ENCODE measurements at regions of chr15 and their contacts with region 1.

Region 1: DNA sequence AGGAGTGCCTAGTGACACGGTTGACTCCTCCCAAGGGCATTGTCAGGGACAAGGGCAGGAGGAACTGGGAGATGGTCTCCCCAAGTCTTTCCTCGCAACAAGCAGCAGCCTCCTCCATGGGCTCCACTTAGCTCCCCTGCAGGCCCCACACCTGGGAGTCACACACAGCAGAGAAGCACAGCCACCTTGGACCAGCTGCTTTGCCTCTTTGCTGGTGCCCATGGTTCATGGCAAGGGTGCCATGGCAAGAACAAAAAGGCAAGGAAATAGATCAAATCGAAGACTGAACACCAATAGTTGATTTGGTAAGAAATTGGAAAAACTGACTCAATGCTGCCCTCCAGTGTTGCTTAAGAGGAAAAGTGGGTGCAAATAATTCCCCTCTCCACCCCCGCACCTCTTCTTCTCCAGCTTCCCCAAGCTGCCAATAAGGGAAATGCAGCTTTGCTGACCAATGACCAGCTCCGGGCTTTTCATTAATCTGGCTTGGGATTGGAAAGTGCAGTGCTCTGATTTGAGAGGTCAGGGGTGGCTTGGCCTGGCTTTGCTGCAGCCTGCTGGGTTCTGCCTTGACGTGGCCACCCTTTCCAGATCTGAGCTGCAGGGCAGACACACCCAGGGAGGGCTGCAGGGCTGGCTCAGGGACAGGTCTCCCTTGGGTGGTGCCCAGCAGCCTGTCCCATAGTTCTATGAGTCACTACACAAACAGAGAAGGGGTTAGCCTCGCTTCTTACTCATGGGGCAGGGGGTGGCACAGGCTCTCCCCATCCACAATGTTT is 162.0 kb downstream of the KLF13 start:
- DNase-seq: peak in 4 of 5 donors; percentile 64 to 69 (median 66)
- H3K4me3 ChIP-seq: no peak overlapping the region
- H3K4me3 Mint-ChIP-seq: peak overlapping the region in 1 of 8 donors; percentile 30
- H3K27ac ChIP-seq: no peak overlapping the region
- H3K27ac Mint-ChIP-seq: peak overlapping the region in 5 of 7 donors; percentile 17 to 77 (median 72)
- H3K4me1 ChIP-seq: peaks cover 37% of the 10 kb centered on the region
- H3K4me1 Mint-ChIP-seq: peaks cover 14 to 51% (median 24%) of the 10 kb centered on the region in 4 donors
- H3K27me3 ChIP-seq: no peaks in the 10 kb centered on the region
- H3K27me3 Mint-ChIP-seq: no peaks in the 10 kb centered on the region

Region 2: DNA sequence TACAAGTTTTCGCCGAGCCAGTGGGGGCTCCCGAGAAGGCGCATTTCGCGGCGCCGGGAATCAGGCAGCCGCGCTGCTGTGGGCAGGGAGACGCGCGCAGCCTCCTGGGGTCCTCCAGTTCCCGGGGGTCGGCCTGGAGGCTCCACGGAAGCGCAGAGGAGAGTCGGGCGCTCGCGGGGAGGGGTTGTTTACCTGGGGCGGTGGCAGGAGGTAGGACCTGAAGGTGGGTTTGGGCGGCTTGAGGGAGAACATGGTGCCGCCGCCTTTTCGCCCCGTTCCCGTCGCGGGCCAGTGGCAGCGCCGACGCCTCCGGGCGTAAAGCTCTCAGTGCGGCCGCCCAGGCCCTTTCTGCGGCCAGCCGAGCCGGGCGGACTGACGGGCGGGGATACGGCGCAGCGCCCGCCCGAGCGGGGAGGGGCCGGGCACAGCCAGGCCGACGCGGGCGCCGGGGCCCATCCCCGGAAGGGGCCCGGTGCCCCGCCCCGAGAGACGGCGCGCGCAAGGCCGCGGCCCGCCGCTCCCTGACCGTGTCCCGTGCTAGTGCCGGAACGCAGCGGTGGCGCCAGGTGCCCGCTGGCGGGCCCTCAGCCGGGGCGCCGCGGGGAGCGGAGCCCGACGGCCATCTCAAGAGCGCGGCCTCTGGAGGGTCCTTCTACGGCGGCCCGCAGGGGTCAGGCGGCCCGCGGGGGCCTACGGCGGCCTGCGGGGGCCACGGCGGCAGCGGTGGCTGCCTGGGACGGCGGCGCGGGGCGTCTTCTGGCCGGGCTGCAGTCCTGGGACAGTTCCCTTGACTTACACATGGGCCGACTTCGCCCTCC is 497.2 kb before region 1 on chr15 and contains the start of gene MTMR10:
- CTCF ChIA-PET with region 1: interaction called, 10 read pairs
- POLR2A ChIA-PET with region 1: no interaction called
- intact Hi-C with region 1: loop called (anchors 5 kb)
- DNase-seq: peak; percentile 70 to 84 (median 82)
- H3K4me3 ChIP-seq: peak within 1 kb of the TSS; percentile 64 to 76
- H3K4me3 Mint-ChIP-seq: peak within 1 kb of the TSS; percentile 94 to 98 (median 96)
- H3K27ac ChIP-seq: peak within 1 kb of the TSS; percentile 76
- H3K27ac Mint-ChIP-seq: peak within 1 kb of the TSS; percentile 89 to 95 (median 94)
- H3K4me1 ChIP-seq: peaks cover 30% of the 10 kb centered on the region
- H3K4me1 Mint-ChIP-seq: peaks cover 19 to 32% (median 27%) of the 10 kb centered on the region in 4 donors
- H3K27me3 ChIP-seq: no peaks in the 10 kb centered on the region
- H3K27me3 Mint-ChIP-seq: no peaks in the 10 kb centered on the region
- total RNA-seq, gene MTMR10: 29.6 to 31.8 TPM

Region 3: DNA sequence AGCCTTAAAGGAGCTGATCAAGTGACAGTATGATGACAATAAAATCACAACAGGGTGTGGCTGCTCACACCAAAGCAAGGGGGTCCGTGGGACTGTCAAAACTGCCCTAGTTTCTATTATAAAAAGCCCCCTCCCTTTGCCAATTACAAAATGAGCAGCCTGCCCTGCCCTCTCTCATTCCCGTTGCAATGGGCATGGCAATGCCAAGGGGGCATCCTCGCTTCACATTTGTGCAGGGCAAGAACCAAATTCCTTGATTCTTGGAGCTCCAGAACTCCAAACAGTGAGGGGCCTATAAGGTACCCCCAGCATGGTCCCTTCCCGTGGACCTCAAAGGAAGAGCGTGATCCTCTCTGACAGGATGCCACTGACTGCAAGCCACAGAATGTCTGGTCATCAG is 282.2 kb before region 1 on chr15:
- CTCF ChIA-PET with region 1: interaction called, 224 read pairs
- POLR2A ChIA-PET with region 1: interaction called, 19 read pairs
- intact Hi-C with region 1: no loop called
- DNase-seq: no peak
- H3K4me3 ChIP-seq: no peak overlapping the region
- H3K4me3 Mint-ChIP-seq: no peak overlapping the region
- H3K27ac ChIP-seq: no peak overlapping the region
- H3K27ac Mint-ChIP-seq: no peak overlapping the region
- H3K4me1 ChIP-seq: peaks cover 36% of the 10 kb centered on the region
- H3K4me1 Mint-ChIP-seq: peaks cover 14 to 34% (median 22%) of the 10 kb centered on the region in 4 donors
- H3K27me3 ChIP-seq: no peaks in the 10 kb centered on the region
- H3K27me3 Mint-ChIP-seq: no peaks in the 10 kb centered on the region

Region 4: DNA sequence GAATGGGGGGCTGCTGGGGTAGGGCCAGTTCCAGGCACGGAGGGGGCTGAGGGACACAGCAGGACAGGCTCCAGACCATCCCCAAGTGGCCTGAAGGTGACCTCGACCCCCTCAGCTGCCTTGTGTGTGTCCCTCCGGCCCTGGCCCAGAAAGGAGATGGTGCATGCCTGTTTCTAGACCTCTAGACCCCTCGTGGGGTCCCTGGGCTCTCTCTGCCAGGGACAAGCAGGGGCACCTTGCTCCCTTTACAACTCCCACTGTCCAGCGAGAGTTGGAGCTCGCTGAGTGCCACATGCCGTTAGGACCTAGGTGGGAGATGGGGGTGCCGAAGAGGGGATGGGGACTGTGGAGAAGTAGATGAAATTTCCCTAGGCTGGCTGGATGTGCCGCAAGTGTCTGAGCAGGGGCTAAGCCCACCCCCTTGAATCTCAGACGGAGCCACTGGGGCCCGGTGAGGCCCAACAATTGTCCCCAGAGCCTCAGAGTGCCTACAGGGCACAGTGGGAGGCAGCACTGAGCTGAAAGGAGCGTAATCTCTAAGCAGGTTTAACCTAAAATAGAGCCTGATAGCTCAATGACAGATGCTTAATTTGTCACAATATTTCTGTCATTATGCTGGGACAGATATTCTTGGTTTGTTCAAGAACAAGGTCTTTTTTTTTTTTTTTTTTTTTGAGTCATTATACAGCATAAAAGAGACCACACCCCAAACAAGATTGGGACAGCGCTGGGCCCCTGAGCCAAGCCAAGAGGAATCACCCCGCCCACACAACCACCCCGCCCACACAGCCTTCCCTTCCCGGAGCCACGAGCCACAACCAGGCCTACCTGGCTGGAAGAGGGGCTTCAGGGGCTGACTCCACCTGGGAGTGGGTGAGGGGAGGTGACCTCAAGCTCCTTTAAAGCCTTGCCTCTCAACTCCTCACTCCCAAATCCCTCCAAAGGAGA is 185.6 kb before region 1 on chr15:
- CTCF ChIA-PET with region 1: interaction called, 9 read pairs
- POLR2A ChIA-PET with region 1: no interaction called
- intact Hi-C with region 1: loop called (anchors 1 kb)
- DNase-seq: peak in 1 of 5 donors; percentile 16
- H3K4me3 ChIP-seq: no peak overlapping the region
- H3K4me3 Mint-ChIP-seq: peak overlapping the region in 1 of 8 donors; percentile 26
- H3K27ac ChIP-seq: no peak overlapping the region
- H3K27ac Mint-ChIP-seq: peak overlapping the region in 4 of 7 donors; percentile 23 to 42 (median 36)
- H3K4me1 ChIP-seq: peaks cover 16% of the 10 kb centered on the region
- H3K4me1 Mint-ChIP-seq: peaks cover 17 to 39% (median 27%) of the 10 kb centered on the region in 4 donors
- H3K27me3 ChIP-seq: no peaks in the 10 kb centered on the region
- H3K27me3 Mint-ChIP-seq: peaks cover 0 to 7% of the 10 kb centered on the region in 2 donors

Region 5: GRCh38 chr15:31365655-31366127 is 122.9 kb before region 1 on chr15:
- CTCF ChIA-PET with region 1: interaction called, 137 read pairs
- POLR2A ChIA-PET with region 1: interaction called, 49 read pairs
- intact Hi-C with region 1: loop called (anchors 1 kb)
- DNase-seq: peak; percentile 71 to 84 (median 77)
- H3K4me3 ChIP-seq: peak overlapping the region in 1 of 2 donors; percentile 17
- H3K4me3 Mint-ChIP-seq: peak overlapping the region; percentile 79 to 91 (median 84)
- H3K27ac ChIP-seq: peak overlapping the region; percentile 82
- H3K27ac Mint-ChIP-seq: peak overlapping the region; percentile 91 to 98 (median 96)
- H3K4me1 ChIP-seq: peaks cover 99% of the 10 kb centered on the region
- H3K4me1 Mint-ChIP-seq: peaks cover 70 to 100% (median 92%) of the 10 kb centered on the region in 4 donors
- H3K27me3 ChIP-seq: no peaks in the 10 kb centered on the region
- H3K27me3 Mint-ChIP-seq: no peaks in the 10 kb centered on the region

Region 6: GRCh38 chr15:31396881-31397560 is 91.6 kb before region 1 on chr15:
- CTCF ChIA-PET with region 1: interaction called, 11 read pairs
- POLR2A ChIA-PET with region 1: interaction called, 18 read pairs
- intact Hi-C with region 1: loop called (anchors 2 kb)
- DNase-seq: no peak
- H3K4me3 ChIP-seq: no peak overlapping the region
- H3K4me3 Mint-ChIP-seq: no peak overlapping the region
- H3K27ac ChIP-seq: no peak overlapping the region
- H3K27ac Mint-ChIP-seq: no peak overlapping the region
- H3K4me1 ChIP-seq: peaks cover 15% of the 10 kb centered on the region
- H3K4me1 Mint-ChIP-seq: peaks cover 10 to 41% (median 17%) of the 10 kb centered on the region in 4 donors
- H3K27me3 ChIP-seq: no peaks in the 10 kb centered on the region
- H3K27me3 Mint-ChIP-seq: no peaks in the 10 kb centered on the region

Region 7: DNA sequence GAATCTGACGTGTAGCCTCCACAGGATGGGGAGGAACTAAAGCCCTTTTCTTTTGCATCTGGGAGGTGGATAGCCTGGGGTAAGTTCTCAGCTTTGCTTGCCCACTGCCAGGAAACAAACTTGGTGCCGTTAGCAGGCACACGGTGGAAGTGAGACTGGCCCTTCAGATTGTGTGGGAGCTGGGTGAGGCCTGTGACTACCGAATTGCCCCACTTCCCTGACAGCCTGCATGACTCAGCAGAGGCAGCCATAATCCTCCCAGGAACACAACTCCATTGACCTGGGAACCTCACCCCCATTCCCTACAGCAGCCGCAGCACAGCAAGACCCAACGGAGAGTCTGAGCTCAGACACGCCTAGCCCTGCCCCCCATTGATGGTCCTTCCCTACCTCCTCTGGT is 120.6 kb after region 1 on chr15:
- CTCF ChIA-PET with region 1: no interaction called
- POLR2A ChIA-PET with region 1: no interaction called
- intact Hi-C with region 1: no loop called
- DNase-seq: no peak
- H3K4me3 ChIP-seq: no peak overlapping the region
- H3K4me3 Mint-ChIP-seq: no peak overlapping the region
- H3K27ac ChIP-seq: no peak overlapping the region
- H3K27ac Mint-ChIP-seq: no peak overlapping the region
- H3K4me1 ChIP-seq: no peaks in the 10 kb centered on the region
- H3K4me1 Mint-ChIP-seq: no peaks in the 10 kb centered on the region
- H3K27me3 ChIP-seq: no peaks in the 10 kb centered on the region
- H3K27me3 Mint-ChIP-seq: peaks cover 9 to 18% of the 10 kb centered on the region in 2 donors